Activated T-helper 2 cell treated with anti-CD3 and anti-CD28 coated beads, Interferon-gamma antibody, Interleukin-2, Interleukin-4, amounts not matched to agents 10 μg/mL and 5 μg/mL and 100 μg/mL, durations not matched to agents 14 hours and 24 hours and 36 hours (primary cell): ENCODE measurements at regions of chr10 and their contacts with region 1.

Region 1: GRCh38 chr10:8365935-8366911 is 311.7 kb downstream of the GATA3 start:
- DNase-seq: peak; percentile 46
- H3K4me3 Mint-ChIP-seq: peak overlapping the region; percentile 64
- H3K27ac Mint-ChIP-seq: peak overlapping the region; percentile 98
- H3K4me1 Mint-ChIP-seq: peaks cover 69% of the 10 kb centered on the region
- H3K27me3 Mint-ChIP-seq: no peaks in the 10 kb centered on the region

Region 2: DNA sequence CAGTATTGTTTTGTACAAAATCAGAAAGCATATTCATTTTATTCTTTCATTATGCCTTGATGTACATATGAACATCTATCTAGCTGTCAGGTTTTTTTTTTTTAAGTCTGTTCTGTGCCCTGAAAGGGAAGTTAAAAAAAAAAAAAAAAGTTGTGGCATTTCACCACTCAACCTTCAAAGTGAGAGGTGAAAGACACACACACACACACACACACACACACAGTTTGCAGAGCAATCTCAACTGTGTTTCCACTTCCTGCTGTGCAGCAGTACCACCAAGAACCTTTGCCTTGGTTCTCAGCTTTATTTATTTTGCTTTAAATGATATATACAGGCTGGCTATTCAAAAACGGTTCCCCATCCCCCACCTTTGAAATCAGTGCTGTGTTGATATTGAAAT is 643.9 kb after region 1 on chr10:
- intact Hi-C with region 1: loop called (anchors 10 kb)
- DNase-seq: peak; percentile 55
- H3K4me3 Mint-ChIP-seq: peak overlapping the region; percentile 5
- H3K27ac Mint-ChIP-seq: peak overlapping the region; percentile 84
- H3K4me1 Mint-ChIP-seq: peaks cover 79% of the 10 kb centered on the region
- H3K27me3 Mint-ChIP-seq: no peaks in the 10 kb centered on the region

Region 3: GRCh38 chr10:9550810-9551209 is 1184.6 kb after region 1 on chr10:
- intact Hi-C with region 1: no loop called
- DNase-seq: no peak
- H3K4me3 Mint-ChIP-seq: no peak overlapping the region
- H3K27ac Mint-ChIP-seq: no peak overlapping the region
- H3K4me1 Mint-ChIP-seq: no peaks in the 10 kb centered on the region
- H3K27me3 Mint-ChIP-seq: no peaks in the 10 kb centered on the region